PC-9 (cell line): ENCODE measurements at regions of chr9 and their contacts with region 1.

Region 1: GRCh38 chr9:129177791-129178559 is at the start of gene IER5L:
- DNase-seq: peak; percentile 87 to 98
- H3K4me3 ChIP-seq: peak within 1 kb of the TSS; percentile 95
- H3K27ac ChIP-seq: peak within 1 kb of the TSS; percentile 45; the same call in 1 of the 2 replicates
- H3K4me1 ChIP-seq: peaks cover 18% of the 10 kb centered on the region
- H3K27me3 ChIP-seq: no peaks in the 10 kb centered on the region
- CTCF ChIP-seq: no peak
- total RNA-seq, gene IER5L: 35.5 and 37.3 TPM in 2 replicates

Region 2: DNA sequence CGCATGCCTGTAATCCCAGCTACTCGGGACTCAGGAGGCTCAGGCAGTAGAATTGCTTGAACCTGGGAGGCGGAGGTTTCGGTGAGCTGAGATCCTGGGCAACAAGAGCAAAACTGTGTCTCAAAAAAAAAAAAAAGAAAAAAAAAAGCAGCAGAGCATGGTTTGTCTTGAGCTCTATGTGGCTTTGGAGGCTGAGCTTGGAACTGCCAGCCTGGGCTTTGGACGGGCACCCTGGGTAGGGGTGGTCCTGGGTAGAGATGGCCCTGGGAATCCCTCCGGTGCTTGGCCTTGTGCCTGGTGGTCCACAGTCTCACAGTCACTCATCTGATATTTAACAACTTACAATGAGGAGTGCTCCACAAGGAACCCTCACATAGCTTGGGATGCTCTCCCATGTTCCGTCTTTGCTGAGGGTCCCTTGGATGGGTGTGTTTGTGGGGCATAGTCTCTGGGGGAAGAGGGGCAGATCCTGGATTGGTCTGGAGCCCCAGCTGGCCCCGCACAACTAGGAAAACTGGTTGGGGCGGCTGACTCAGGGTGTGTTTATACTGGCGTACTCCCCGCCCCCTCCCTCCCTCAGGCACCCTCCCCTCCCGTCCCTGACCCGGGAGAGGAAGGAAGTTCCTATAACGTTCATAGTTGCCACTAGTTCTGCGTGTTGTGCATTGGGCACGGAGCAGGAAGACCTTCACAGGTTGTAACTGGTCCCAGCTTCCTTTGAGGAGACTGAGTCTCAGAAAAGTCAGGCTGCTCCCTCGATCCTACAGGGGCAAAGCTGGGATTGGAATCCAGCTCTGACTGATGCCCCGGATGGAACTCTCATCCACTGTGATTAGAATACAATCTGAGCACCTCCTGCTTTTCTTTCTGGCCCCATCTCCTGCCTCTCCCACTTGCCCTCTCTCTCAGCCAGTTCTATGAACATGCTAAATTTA is 11.1 kb before region 1 on chr9:
- CTCF ChIA-PET with region 1: no interaction called
- POLR2A ChIA-PET with region 1: interaction called, 12 read pairs
- intact Hi-C with region 1: no loop called
- DNase-seq: peak; percentile 89 to 90
- H3K4me3 ChIP-seq: peak overlapping the region; percentile 56; the same call in 1 of the 2 replicates
- H3K27ac ChIP-seq: peak overlapping the region; percentile 90
- H3K4me1 ChIP-seq: peaks cover 43% of the 10 kb centered on the region
- H3K27me3 ChIP-seq: no peaks in the 10 kb centered on the region
- CTCF ChIP-seq: no peak

Region 3: GRCh38 chr9:129278391-129279237 is 100.6 kb after region 1 on chr9:
- CTCF ChIA-PET with region 1: interaction called, 8 read pairs
- POLR2A ChIA-PET with region 1: interaction called, 15 read pairs
- intact Hi-C with region 1: loop called (anchors 1 kb)
- DNase-seq: peak; percentile 86 to 97
- H3K4me3 ChIP-seq: peak overlapping the region; percentile 58; the same call in 1 of the 2 replicates
- H3K27ac ChIP-seq: peak overlapping the region; percentile 79
- H3K4me1 ChIP-seq: peaks cover 51% of the 10 kb centered on the region
- H3K27me3 ChIP-seq: no peaks in the 10 kb centered on the region
- CTCF ChIP-seq: no peak

Region 4: GRCh38 chr9:129406278-129407225 is 228.6 kb after region 1 on chr9:
- CTCF ChIA-PET with region 1: interaction called, 3 read pairs
- POLR2A ChIA-PET with region 1: no interaction called
- intact Hi-C with region 1: loop called (anchors 5 kb)
- DNase-seq: peak; percentile 79 to 87
- H3K4me3 ChIP-seq: peak overlapping the region; percentile 42; the same call in 1 of the 2 replicates
- H3K27ac ChIP-seq: 0 out of 2 replicates have a peak overlapping the region, but pooled peaks have one; percentile 7
- H3K4me1 ChIP-seq: peaks cover 26% of the 10 kb centered on the region
- H3K27me3 ChIP-seq: no peaks in the 10 kb centered on the region
- CTCF ChIP-seq: no peak

Region 5: GRCh38 chr9:129482521-129483414 is 304.8 kb after region 1 on chr9:
- CTCF ChIA-PET with region 1: no interaction called
- POLR2A ChIA-PET with region 1: interaction called, 17 read pairs
- intact Hi-C with region 1: loop called (anchors 1 kb)
- DNase-seq: peak; percentile 69 to 92
- H3K4me3 ChIP-seq: peak overlapping the region; percentile 88
- H3K27ac ChIP-seq: peak overlapping the region; percentile 99
- H3K4me1 ChIP-seq: peaks cover 82% of the 10 kb centered on the region
- H3K27me3 ChIP-seq: no peaks in the 10 kb centered on the region
- CTCF ChIP-seq: no peak

Region 6: GRCh38 chr9:129610473-129611301 is 432.7 kb after region 1 on chr9:
- CTCF ChIA-PET with region 1: no interaction called
- POLR2A ChIA-PET with region 1: interaction called, 3 read pairs
- intact Hi-C with region 1: loop called (anchors 1 kb)
- DNase-seq: peak in 1 of 2 experiments; percentile 77
- H3K4me3 ChIP-seq: peak overlapping the region; percentile 93
- H3K27ac ChIP-seq: peak overlapping the region; percentile 62
- H3K4me1 ChIP-seq: peaks cover 32% of the 10 kb centered on the region
- H3K27me3 ChIP-seq: no peaks in the 10 kb centered on the region
- CTCF ChIP-seq: peak; percentile 85